PC-3 (cell line): ENCODE measurements at regions of chr5 and their contacts with region 1.

Region 1: GRCh38 chr5:154447089-154447725 is 1.4 kb downstream of the SAP30L start:
- DNase-seq: no peak
- ATAC-seq: 0 out of 2 replicates have a peak, but pooled peaks have one; percentile 0
- H3K4me3 ChIP-seq: peak overlapping the region; percentile 97
- H3K27ac ChIP-seq: no peak overlapping the region
- H3K4me1 ChIP-seq: peaks cover 14% of the 10 kb centered on the region; the same call in 1 of the 2 replicates
- H3K27me3 ChIP-seq: no peaks in the 10 kb centered on the region
- CTCF ChIP-seq: no peak

Region 2: GRCh38 chr5:154060606-154061005 is 386.6 kb before region 1 on chr5:
- CTCF ChIA-PET with region 1: interaction called, 12 read pairs
- POLR2A ChIA-PET with region 1: no interaction called
- intact Hi-C with region 1: no loop called
- DNase-seq: no peak
- ATAC-seq: no peak
- H3K4me3 ChIP-seq: no peak overlapping the region
- H3K27ac ChIP-seq: no peak overlapping the region
- H3K4me1 ChIP-seq: no peaks in the 10 kb centered on the region
- H3K27me3 ChIP-seq: no peaks in the 10 kb centered on the region
- CTCF ChIP-seq: no peak

Region 3: DNA sequence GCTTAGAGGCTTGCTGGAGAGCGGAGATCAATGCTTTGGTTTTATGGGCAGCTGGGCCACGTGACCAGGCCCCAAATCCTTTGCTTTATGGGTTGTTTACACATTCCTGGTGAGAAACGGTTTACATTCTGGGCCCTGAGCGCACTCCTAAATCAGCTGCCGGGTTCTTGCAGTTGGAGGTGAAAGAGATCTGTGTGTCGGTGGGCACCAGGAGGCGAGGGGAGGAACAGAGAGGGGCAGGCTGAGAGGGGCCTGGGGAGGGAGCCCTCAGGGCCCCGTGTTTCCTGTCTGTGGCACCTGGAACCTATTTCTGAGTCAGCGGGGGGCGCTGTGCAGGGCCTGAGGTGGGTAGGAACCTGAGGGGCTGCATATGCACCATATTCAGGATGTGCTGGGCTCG is 94.3 kb after region 1 on chr5:
- CTCF ChIA-PET with region 1: no interaction called
- POLR2A ChIA-PET with region 1: no interaction called
- intact Hi-C with region 1: no loop called
- DNase-seq: peak; percentile 5
- ATAC-seq: no peak
- H3K4me3 ChIP-seq: no peak overlapping the region
- H3K27ac ChIP-seq: no peak overlapping the region
- H3K4me1 ChIP-seq: no peaks in the 10 kb centered on the region
- H3K27me3 ChIP-seq: peaks cover 43% of the 10 kb centered on the region
- CTCF ChIP-seq: peak; percentile 65

Region 4: GRCh38 chr5:154654486-154655371 is 207.5 kb after region 1 on chr5:
- CTCF ChIA-PET with region 1: no interaction called
- POLR2A ChIA-PET with region 1: no interaction called
- intact Hi-C with region 1: no loop called
- DNase-seq: no peak
- ATAC-seq: no peak
- H3K4me3 ChIP-seq: no peak overlapping the region
- H3K27ac ChIP-seq: no peak overlapping the region
- H3K4me1 ChIP-seq: no peaks in the 10 kb centered on the region
- H3K27me3 ChIP-seq: no peaks in the 10 kb centered on the region
- CTCF ChIP-seq: no peak